Left ventricle myocardium inferior (tissue), 1 donor: ENCODE measurements at regions of chr10 and their contacts with region 1.

Region 1: GRCh38 chr10:60964257-60965235 is 20.6 kb upstream of the RHOBTB1 start:
- DNase-seq: peak; percentile 58
- H3K4me3 ChIP-seq: no peak overlapping the region
- H3K27ac ChIP-seq: peak overlapping the region; percentile 51
- H3K4me1 ChIP-seq: peaks cover 11% of the 10 kb centered on the region
- H3K27me3 ChIP-seq: no peaks in the 10 kb centered on the region
- CTCF ChIP-seq: peak; percentile 87

Region 2: DNA sequence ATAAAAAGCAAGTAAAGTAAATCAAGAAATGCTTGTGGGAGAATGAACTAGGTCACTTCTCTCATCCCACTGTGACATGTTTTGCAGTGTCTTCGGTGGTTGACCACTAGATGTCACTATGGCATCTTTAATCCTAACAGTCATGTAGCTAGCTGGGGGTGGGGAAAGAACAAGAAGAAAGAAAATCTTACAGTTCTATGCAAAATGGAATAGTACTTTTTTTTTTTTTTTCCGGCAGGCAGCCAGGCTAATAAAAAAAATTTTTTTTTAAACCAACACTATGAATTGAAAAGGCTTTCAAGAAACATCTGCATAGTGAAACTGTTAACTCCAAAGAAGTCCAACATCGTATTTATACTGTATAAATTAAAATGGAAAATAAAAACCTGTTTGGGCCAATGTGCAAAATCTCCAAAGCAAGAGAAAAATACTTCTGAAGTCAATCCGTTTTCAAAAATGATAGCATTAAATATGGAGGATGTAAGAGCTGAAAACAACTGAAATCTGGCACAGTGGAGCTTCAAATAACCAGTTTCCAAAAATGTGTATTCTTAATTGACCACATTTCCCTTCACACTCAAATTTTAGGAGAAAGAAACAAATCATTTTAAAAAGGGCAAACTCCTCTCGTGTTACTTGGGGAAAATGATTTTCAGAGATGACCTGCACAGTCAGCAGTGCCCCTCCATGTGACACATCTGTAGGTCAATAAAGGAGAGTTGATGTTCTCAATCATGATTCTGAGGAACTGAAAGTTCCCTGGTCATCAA is 147.7 kb before region 1 on chr10:
- intact Hi-C with region 1: loop called (anchors 5 kb)
- DNase-seq: no peak
- H3K4me3 ChIP-seq: peak overlapping the region; percentile 5
- H3K27ac ChIP-seq: peak overlapping the region; percentile 18
- H3K4me1 ChIP-seq: peaks cover 30% of the 10 kb centered on the region
- H3K27me3 ChIP-seq: no peaks in the 10 kb centered on the region
- CTCF ChIP-seq: peak; percentile 89

Region 3: GRCh38 chr10:60883187-60883586 is 81.4 kb before region 1 on chr10:
- intact Hi-C with region 1: loop called (anchors 5 kb)
- DNase-seq: no peak
- H3K4me3 ChIP-seq: no peak overlapping the region
- H3K27ac ChIP-seq: peak overlapping the region; percentile 66
- H3K4me1 ChIP-seq: peaks cover 43% of the 10 kb centered on the region
- H3K27me3 ChIP-seq: no peaks in the 10 kb centered on the region
- CTCF ChIP-seq: peak; percentile 70